Heart right ventricle (tissue), 16 donors: ENCODE measurements at regions of chr2 and their contacts with region 1.

Region 1: GRCh38 chr2:134118279-134119116 is 135.4 kb upstream of the MGAT5 start:
- DNase-seq: peak; percentile 70 to 91
- ATAC-seq: peak; percentile 45 to 81 (median 61)
- H3K4me3 ChIP-seq: peak overlapping the region in 3 of 10 donors; percentile 1 to 8 (median 2)
- H3K27ac ChIP-seq: peak overlapping the region in 8 of 10 donors; percentile 92 to 98 (median 95)
- H3K4me1 ChIP-seq: peaks cover 4 to 45% (median 40%) of the 10 kb centered on the region in 9 donors
- H3K27me3 ChIP-seq: no peaks in the 10 kb centered on the region
- CTCF ChIP-seq: peak; percentile 48 to 93 (median 84)

Region 2: GRCh38 chr2:134181210-134181609 is 62.7 kb after region 1 on chr2:
- intact Hi-C with region 1: loop called in 4 of 10 experiments (anchors 10 kb)
- DNase-seq: no peak
- ATAC-seq: peak in 6 of 8 donors; percentile 13 to 68 (median 44)
- H3K4me3 ChIP-seq: no peak overlapping the region
- H3K27ac ChIP-seq: peak overlapping the region in 4 of 10 donors; percentile 15 to 39 (median 26)
- H3K4me1 ChIP-seq: peaks cover 16 to 74% (median 65%) of the 10 kb centered on the region in 9 donors
- H3K27me3 ChIP-seq: no peaks in the 10 kb centered on the region
- CTCF ChIP-seq: no peak

Region 3: DNA sequence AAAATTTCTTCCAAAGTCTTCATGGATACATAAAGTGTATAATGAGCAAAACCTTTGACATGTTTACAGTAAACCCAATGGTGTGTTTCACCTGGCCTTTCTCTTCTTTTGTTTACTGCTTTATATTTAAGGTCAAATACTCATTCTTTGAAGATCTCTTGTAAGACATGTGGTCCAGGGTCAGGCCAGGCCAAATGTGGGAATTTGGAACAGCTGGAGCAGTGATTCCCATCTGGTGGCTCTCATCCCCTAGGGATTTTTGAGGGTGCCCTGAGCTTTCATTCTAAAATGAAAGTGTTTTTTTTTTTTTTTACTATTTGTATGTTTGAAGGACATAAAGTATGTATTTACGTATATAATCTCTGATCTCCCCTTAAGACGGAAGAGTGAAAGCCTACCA is 121.6 kb after region 1 on chr2:
- intact Hi-C with region 1: loop called in 8 of 10 experiments (anchors 1 to 10 kb)
- DNase-seq: no peak
- ATAC-seq: no peak
- H3K4me3 ChIP-seq: no peak overlapping the region
- H3K27ac ChIP-seq: no peak overlapping the region
- H3K4me1 ChIP-seq: peaks cover 0 to 74% (median 28%) of the 10 kb centered on the region in 9 donors
- H3K27me3 ChIP-seq: no peaks in the 10 kb centered on the region
- CTCF ChIP-seq: no peak

Region 4: DNA sequence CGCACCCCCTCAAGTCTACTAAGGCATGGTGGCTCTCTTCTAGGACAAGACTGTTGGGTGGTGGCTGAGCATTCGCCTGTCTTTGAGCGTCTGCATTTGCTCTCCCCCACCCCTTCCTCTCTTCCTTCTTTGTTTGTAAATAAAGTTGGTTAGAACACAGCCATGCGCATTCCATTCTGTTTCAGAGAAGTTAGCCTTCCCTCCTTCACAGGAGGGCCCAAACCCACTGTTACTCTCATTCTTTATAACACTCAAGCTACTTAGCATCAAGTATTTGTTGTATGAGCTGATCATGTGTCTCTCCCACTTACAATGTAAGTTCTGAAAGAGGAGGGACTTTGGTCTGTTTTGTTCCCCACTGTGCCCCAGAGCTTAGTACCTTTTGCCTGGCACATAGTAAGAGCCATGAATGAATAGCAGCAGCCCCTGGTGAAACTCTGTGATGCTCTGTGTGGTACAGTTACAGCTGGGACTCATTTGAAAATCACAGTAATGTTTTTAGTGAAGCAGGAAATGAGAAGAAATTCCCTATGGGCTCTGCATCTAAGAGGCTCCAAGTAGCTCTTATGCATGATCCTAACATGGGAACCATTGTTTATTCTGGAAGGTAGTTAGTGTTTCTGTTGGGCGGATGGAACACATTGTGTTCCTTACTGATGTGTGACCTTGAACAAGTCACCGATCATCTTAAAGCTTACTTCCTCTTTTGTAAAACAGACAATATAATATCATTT is 143.1 kb after region 1 on chr2:
- intact Hi-C with region 1: loop called in 3 of 10 experiments (anchors 5 to 10 kb)
- DNase-seq: no peak
- ATAC-seq: peak in 7 of 8 donors; percentile 25 to 73 (median 63)
- H3K4me3 ChIP-seq: no peak overlapping the region
- H3K27ac ChIP-seq: peak overlapping the region; percentile 45 to 82 (median 78)
- H3K4me1 ChIP-seq: peaks cover 33 to 75% (median 63%) of the 10 kb centered on the region in 9 donors
- H3K27me3 ChIP-seq: no peaks in the 10 kb centered on the region
- CTCF ChIP-seq: no peak

Region 5: GRCh38 chr2:134411828-134412638 is 293.5 kb after region 1 on chr2:
- intact Hi-C with region 1: loop called (anchors 1 to 5 kb)
- DNase-seq: peak; percentile 37 to 82
- ATAC-seq: peak; percentile 88 to 98 (median 96)
- H3K4me3 ChIP-seq: no peak overlapping the region
- H3K27ac ChIP-seq: peak overlapping the region in 8 of 10 donors; percentile 20 to 70 (median 49)
- H3K4me1 ChIP-seq: peaks cover 12 to 53% (median 44%) of the 10 kb centered on the region in 9 donors
- H3K27me3 ChIP-seq: no peaks in the 10 kb centered on the region
- CTCF ChIP-seq: peak; percentile 40 to 85 (median 74)

Region 6: DNA sequence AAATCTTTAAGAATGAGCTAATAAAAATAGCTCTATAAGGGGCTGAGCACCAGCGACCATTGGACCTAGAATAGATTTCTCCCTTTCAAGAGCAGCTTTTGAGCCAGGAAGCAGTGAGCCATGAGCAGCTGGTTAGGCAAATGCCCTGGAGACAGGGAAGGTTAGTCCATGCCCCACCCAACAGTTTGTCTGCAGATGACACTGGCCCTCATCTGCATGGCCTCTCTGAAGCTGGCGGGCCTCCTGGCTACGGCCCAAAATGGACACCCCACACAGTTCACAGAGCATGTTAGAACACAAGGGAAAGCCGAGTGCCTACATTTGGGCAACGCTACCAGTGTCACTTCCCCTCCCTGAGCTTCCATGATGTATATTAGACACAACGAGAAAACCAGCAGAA is 336.4 kb after region 1 on chr2:
- intact Hi-C with region 1: loop called in 3 of 10 experiments (anchors 1 to 5 kb)
- DNase-seq: no peak
- ATAC-seq: peak in 1 of 8 donors; percentile 15
- H3K4me3 ChIP-seq: no peak overlapping the region
- H3K27ac ChIP-seq: no peak overlapping the region
- H3K4me1 ChIP-seq: peaks cover 0 to 16% (median 0%) of the 10 kb centered on the region in 9 donors
- H3K27me3 ChIP-seq: no peaks in the 10 kb centered on the region
- CTCF ChIP-seq: no peak